ENCODE measurements at regions of chr1 and their contacts with region 1.

Region 1: GRCh38 chr1:202160377-202160940 is at the start of gene PTPN7:
- DNase-seq: peak; percentile 96
- H3K4me3 Mint-ChIP-seq: peak within 1 kb of the TSS; percentile 89
- H3K27ac Mint-ChIP-seq: peak within 1 kb of the TSS; percentile 97
- H3K4me1 Mint-ChIP-seq: peaks cover 73% of the 10 kb centered on the region
- H3K27me3 Mint-ChIP-seq: no peaks in the 10 kb centered on the region
- total RNA-seq, gene PTPN7: 197 to 199 TPM

Region 2: DNA sequence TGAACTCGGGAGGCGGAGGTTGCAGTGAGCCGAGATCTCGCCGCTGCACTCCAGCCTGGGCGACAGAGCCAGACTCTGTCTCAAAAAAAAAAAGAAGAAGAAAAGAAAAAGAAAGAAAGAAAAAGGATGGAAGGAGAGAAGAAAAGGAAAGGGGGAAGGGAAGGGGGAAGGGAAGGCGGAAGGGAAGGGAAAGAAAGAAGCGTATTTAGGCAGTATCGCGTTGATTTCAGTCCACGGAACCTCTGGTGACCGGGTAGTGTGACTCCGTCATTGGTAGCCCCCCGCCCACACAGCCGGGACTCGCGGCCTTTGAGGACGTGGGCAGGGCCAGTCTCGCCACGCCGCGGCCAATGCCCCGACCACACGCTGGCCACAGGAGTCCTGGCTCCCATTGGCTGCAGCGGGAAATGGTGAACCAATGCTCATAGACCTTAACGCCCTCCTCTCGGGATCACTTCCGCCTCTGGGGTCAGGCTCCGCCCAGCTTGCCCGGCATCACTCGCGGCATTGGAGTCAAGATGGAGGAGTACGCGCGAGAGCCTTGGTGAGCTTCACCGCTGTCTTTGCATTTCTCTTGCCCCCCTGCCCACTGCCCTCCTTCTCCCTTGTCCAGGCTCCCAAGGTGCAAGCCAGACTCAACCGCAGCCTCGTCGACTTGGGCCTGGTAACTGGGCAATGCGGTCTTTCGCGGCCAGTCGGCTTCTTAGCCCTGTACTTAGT is 205.3 kb before region 1 on chr1 and contains the start of gene TIMM17A:
- CTCF ChIA-PET with region 1: no interaction called
- POLR2A ChIA-PET with region 1: no interaction called
- intact Hi-C with region 1: loop called (anchors 1 kb)
- DNase-seq: peak; percentile 97
- H3K4me3 Mint-ChIP-seq: peak within 1 kb of the TSS; percentile 99
- H3K27ac Mint-ChIP-seq: peak within 1 kb of the TSS; percentile 87
- H3K4me1 Mint-ChIP-seq: peaks cover 20% of the 10 kb centered on the region
- H3K27me3 Mint-ChIP-seq: no peaks in the 10 kb centered on the region
- total RNA-seq, gene TIMM17A: 66.5 to 67.2 TPM

Region 3: DNA sequence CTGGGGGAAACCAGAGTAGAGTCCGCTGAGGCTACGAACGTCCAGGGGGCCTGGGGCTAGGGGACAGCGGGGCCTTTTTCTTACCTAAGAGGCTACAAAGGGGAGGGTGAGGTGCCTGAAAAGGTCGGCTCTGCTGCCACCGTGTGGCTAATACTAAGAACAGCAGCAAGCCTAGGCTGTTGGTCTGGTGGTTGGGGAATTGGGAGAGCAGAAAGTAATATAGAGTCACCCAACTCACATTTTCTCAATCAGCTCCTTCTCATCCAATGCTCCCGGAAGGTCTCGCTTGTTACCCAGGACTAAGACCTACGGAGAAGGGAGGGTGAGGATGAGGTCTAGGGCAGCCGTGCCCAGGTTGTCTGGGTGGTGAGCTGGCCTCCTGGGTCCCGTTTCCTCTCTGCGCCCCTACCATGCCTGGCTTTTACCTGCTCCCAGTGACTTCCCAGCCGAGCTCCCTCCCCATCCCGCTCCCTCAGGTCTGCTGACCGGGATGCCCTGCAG is 25.2 kb before region 1 on chr1:
- CTCF ChIA-PET with region 1: interaction called, 14 read pairs
- POLR2A ChIA-PET with region 1: no interaction called
- intact Hi-C with region 1: no loop called
- DNase-seq: peak; percentile 62
- H3K4me3 Mint-ChIP-seq: no peak overlapping the region
- H3K27ac Mint-ChIP-seq: no peak overlapping the region
- H3K4me1 Mint-ChIP-seq: no peaks in the 10 kb centered on the region
- H3K27me3 Mint-ChIP-seq: no peaks in the 10 kb centered on the region

Region 4: GRCh38 chr1:202144402-202145067 is 15.9 kb before region 1 on chr1 and contains the start of gene ARL8A:
- CTCF ChIA-PET with region 1: interaction called, 19 read pairs
- POLR2A ChIA-PET with region 1: interaction called, 57 read pairs
- intact Hi-C with region 1: loop called (anchors 1 kb)
- DNase-seq: peak; percentile 77
- H3K4me3 Mint-ChIP-seq: peak within 1 kb of the TSS; percentile 89
- H3K27ac Mint-ChIP-seq: peak within 1 kb of the TSS; percentile 80
- H3K4me1 Mint-ChIP-seq: peaks cover 33% of the 10 kb centered on the region
- H3K27me3 Mint-ChIP-seq: no peaks in the 10 kb centered on the region
- total RNA-seq, gene ARL8A: 38.2 to 40.4 TPM

Region 5: DNA sequence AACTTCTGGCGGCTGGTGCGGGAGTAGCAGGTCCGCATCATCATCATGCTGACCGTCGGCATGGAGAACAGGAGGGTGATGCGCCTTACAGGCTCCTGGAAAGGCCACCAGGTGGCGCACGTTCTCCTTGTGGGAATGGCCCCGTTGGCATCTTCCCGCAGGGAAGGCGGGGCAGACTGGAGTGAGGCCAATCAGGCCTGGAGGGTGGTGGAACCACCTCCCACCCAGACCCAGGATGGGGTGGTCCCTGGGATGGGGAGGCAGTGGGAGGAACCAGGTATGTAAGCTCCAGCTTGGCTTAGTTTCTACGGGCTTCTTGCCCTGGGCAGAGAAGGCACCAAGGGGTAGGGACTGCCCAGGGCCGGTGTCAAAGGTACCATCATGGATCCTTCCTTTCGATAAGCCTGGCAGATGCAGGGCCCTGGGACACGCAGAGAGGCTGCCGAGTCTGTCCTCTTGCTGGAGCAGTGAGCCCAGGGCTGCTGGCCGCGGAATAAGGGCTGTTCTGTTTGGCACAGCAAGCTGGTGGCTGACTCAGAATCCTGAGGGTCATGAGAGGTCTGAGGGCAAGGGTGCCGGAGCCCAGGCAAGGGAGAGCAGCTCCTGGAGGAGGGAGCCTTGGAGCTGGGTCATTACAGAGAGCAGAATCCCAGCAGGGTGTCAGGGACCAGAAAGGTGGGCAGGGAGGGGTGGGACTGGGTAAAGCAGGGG is 24.4 kb after region 1 on chr1:
- CTCF ChIA-PET with region 1: interaction called, 50 read pairs
- POLR2A ChIA-PET with region 1: interaction called, 4 read pairs
- intact Hi-C with region 1: no loop called
- DNase-seq: peak; percentile 84
- H3K4me3 Mint-ChIP-seq: no peak overlapping the region
- H3K27ac Mint-ChIP-seq: no peak overlapping the region
- H3K4me1 Mint-ChIP-seq: peaks cover 8% of the 10 kb centered on the region
- H3K27me3 Mint-ChIP-seq: no peaks in the 10 kb centered on the region

Region 6: DNA sequence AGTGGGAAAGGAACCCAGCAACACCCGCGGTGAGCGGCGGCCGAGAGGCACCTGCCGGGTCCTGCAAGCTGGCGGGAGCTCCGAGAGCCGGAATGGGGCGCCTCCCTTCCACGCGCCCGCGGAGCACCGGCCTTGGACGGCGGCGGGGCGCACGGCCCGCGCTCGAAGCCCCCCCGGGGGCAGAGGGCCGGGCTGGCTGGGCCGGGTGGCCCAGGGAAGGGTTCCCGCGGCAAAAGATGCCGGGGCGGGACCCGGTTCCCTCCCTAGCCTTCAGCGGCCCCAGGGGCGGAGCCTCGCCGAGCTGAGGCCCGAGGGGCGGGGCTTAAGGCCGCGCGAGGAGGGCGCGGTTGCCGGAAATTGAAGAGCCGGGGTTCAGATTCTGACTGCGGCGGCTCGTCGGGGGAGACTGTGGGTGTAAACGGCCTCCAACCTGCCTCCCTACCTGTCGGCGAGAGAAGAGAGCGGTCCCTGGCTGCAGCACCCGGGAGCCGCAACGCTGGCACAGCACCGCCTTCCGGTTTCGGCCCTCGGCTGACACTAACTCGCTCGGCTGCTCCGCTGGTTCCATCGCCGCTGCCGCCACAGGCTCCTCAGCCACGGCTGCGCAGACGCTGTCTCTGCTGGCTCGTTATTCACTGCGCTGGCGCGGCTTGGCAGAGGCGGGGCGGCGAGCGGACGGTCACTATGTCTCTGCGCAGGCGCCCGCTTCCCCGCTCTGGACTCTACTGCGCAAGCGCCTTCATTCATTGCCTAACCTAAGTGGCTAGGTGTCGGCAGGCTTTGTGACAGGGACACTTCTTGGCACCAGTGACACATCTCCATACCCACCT is 728.3 kb after region 1 on chr1 and contains the start of gene RABIF:
- CTCF ChIA-PET with region 1: no interaction called
- POLR2A ChIA-PET with region 1: no interaction called
- intact Hi-C with region 1: loop called (anchors 10 kb)
- DNase-seq: peak; percentile 98
- H3K4me3 Mint-ChIP-seq: peak within 1 kb of the TSS; percentile 93
- H3K27ac Mint-ChIP-seq: peak within 1 kb of the TSS; percentile 98
- H3K4me1 Mint-ChIP-seq: peaks cover 22% of the 10 kb centered on the region
- H3K27me3 Mint-ChIP-seq: no peaks in the 10 kb centered on the region
- total RNA-seq, gene RABIF: 9.6 to 10.1 TPM